A673 (cell line): ENCODE measurements at regions of chr7 and their contacts with region 1.

Region 1: DNA sequence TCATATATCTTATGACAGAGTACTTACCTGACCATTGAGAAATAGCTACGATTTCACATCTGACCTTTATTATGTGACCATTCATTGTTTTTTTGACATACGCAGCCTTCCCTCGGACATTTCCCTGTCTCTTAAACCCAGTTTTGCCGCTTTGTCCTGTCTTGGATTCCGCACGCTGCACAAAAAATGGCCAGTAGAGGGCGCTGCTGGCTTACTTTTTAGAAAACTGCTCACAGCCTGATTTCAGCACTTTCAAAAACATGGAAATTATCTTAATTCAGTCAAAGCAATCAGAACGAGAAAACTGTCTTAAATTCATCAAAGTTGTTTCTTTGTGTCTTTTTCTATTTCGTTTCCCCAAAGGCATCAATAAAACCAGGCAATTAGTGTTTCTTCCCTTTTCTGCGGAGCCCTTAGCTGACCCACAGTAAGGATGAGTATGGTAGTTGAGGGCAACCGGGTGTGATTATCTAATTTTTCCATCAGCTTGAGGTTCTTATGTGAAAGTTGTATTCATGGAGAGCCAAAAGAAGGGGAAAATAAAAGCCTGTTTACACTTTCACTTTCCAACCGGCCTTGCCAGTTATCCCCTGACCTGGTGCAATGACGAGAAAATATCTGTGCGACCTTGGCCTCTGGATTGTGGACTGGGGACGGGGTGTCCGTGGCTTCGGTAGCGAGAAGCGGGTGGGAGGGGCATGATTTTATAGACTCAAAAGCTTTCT is 144.4 kb downstream of the DYNC1I1 start:
- DNase-seq: peak; percentile 82
- H3K4me3 ChIP-seq: peak overlapping the region; percentile 31
- H3K27ac ChIP-seq: peak overlapping the region; percentile 20
- H3K4me1 ChIP-seq: peaks cover 15% of the 10 kb centered on the region
- H3K27me3 ChIP-seq: no peaks in the 10 kb centered on the region
- CTCF ChIP-seq: peak; percentile 97

Region 2: DNA sequence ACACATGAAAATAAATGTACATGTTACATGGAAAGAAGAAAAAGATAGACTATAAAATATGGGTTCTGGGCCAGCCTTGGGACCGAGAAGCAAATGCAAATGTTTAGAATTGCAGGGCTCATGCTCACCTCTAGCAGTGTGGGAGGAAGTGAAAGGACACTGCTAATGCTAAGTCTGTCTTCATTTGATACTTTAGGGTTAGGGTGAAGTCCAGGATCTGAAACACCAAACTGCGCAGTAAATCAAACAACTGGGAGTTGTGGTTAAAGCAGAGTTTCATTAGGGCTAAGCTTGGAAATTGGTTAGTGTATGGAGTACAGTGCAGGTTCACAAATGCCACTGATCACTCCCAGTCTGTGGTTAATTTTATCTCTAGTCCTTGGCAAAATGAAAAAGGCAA is 247.2 kb before region 1 on chr7:
- CTCF ChIA-PET with region 1: no interaction called
- POLR2A ChIA-PET with region 1: no interaction called
- intact Hi-C with region 1: no loop called
- DNase-seq: no peak
- H3K4me3 ChIP-seq: no peak overlapping the region
- H3K27ac ChIP-seq: no peak overlapping the region
- H3K4me1 ChIP-seq: no peaks in the 10 kb centered on the region
- H3K27me3 ChIP-seq: no peaks in the 10 kb centered on the region
- CTCF ChIP-seq: no peak

Region 3: GRCh38 chr7:96075510-96076349 is 159.0 kb after region 1 on chr7:
- CTCF ChIA-PET with region 1: no interaction called
- POLR2A ChIA-PET with region 1: no interaction called
- intact Hi-C with region 1: loop called (anchors 2 kb)
- DNase-seq: peak; percentile 88
- H3K4me3 ChIP-seq: peak overlapping the region; percentile 61
- H3K27ac ChIP-seq: peak overlapping the region; percentile 54
- H3K4me1 ChIP-seq: peaks cover 27% of the 10 kb centered on the region
- H3K27me3 ChIP-seq: no peaks in the 10 kb centered on the region
- CTCF ChIP-seq: peak; percentile 95

Region 4: DNA sequence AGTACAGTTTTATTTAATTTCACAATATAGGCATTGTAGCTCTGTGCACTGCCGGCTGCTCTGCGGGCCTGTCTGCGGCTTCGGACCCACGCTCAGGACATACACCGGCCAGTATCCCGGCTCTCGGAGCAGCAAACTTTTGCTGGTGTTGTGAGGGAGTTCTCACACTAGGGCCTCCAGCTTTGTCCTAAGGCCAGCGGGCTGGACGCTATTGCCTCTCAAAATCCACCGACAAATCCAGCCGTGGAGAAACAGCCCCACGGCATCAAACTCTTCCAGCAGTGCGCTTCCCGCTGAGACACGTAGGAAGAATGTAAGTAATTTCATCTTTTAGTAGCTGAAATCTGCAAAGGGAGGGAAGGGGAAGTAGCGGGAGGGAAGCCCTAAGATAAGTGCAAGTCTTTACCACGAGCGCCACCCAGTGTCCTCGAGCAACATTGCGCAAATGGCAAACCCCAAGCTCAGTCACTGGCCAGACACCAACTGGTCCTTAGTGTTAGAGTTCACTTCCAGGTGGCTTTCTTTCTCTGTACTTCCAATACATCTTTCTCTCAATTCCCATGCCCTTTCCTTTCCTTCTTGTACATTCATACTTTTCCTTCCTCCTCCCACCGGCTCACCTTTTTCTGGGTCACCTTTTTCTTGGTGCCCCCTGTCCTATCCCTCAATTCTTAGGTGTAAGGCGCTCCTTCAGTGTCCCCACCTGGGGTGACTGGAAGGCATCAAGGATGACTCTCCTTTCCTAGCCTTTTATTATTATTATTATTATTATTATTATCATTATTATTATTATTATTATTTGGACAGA is 1110.9 kb after region 1 on chr7:
- CTCF ChIA-PET with region 1: interaction called, 5 read pairs
- POLR2A ChIA-PET with region 1: no interaction called
- intact Hi-C with region 1: loop called (anchors 2 kb)
- DNase-seq: peak; percentile 91
- H3K4me3 ChIP-seq: peak overlapping the region; percentile 40
- H3K27ac ChIP-seq: peak overlapping the region; percentile 62
- H3K4me1 ChIP-seq: peaks cover 25% of the 10 kb centered on the region
- H3K27me3 ChIP-seq: peaks cover 3% of the 10 kb centered on the region
- CTCF ChIP-seq: peak; percentile 93

Region 5: DNA sequence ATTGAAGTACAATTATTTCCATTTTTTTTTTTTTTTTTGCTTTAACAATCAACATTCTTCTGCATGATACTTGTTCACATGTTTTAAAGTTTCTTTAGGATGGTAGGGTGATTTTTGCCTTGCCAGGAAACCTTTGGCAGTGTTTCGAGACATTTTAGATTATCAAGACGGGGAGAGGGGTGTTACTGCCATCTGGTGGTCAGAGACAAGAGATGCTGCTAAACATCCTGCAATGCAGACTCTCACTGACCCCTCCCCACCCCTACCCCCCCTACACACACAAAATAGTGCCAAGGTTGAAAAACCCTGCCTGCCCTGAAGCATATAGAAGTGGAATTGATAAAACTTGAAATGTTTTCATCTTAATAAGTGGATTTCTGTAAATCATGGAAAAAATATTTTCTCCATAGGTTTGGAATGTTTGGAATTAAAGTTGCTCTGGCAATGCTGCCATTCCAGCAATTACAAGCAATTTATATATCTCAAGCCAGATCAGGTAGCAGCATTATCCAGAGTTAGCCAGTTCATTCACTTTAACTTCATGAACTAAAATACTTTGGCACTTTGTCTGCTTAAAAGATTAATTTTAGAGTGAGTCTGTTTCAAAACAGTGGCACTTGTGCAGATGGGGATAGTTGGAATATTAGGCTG is 1262.8 kb after region 1 on chr7:
- CTCF ChIA-PET with region 1: no interaction called
- POLR2A ChIA-PET with region 1: no interaction called
- intact Hi-C with region 1: loop called (anchors 5 kb)
- DNase-seq: peak; percentile 78
- H3K4me3 ChIP-seq: no peak overlapping the region
- H3K27ac ChIP-seq: no peak overlapping the region
- H3K4me1 ChIP-seq: no peaks in the 10 kb centered on the region
- H3K27me3 ChIP-seq: no peaks in the 10 kb centered on the region
- CTCF ChIP-seq: peak; percentile 82